Spleen (tissue), 13 donors: ENCODE measurements at regions of chr14 and their contacts with region 1.

Region 1: GRCh38 chr14:64294672-64295413 is 672 bp upstream of the ESR2 start:
- DNase-seq: peak; percentile 96
- H3K4me3 ChIP-seq: peak overlapping the region; percentile 42 to 76 (median 50)
- H3K27ac ChIP-seq: peak overlapping the region in 7 of 8 donors; percentile 11 to 70 (median 47)
- H3K4me1 ChIP-seq: peaks cover 3 to 36% (median 21%) of the 10 kb centered on the region in 6 donors
- H3K27me3 ChIP-seq: peaks cover 0 to 30% (median 8%) of the 10 kb centered on the region in 7 donors
- CTCF ChIP-seq: peak; percentile 70 to 92 (median 82)
- POLR2A ChIP-seq: no peak

Region 2: GRCh38 chr14:64170181-64170580 is 124.7 kb before region 1 on chr14:
- intact Hi-C with region 1: loop called (anchors 10 kb)
- DNase-seq: no peak
- H3K4me3 ChIP-seq: no peak overlapping the region
- H3K27ac ChIP-seq: no peak overlapping the region
- H3K4me1 ChIP-seq: no peaks in the 10 kb centered on the region
- H3K27me3 ChIP-seq: no peaks in the 10 kb centered on the region
- CTCF ChIP-seq: no peak
- POLR2A ChIP-seq: no peak